ENCODE measurements at regions of chr11 and their contacts with region 1.

Region 1: GRCh38 chr11:43895601-43896000 is 15.0 kb downstream of the ALKBH3 start:
- DNase-seq: no peak
- ATAC-seq: no peak
- H3K4me3 ChIP-seq: no peak overlapping the region
- H3K4me3 Mint-ChIP-seq: no peak overlapping the region
- H3K27ac ChIP-seq: no peak overlapping the region
- H3K27ac Mint-ChIP-seq: no peak overlapping the region
- H3K4me1 ChIP-seq: no peaks in the 10 kb centered on the region
- H3K4me1 Mint-ChIP-seq: peaks cover 0 to 15% (median 9%) of the 10 kb centered on the region in 7 donors
- H3K27me3 ChIP-seq: no peaks in the 10 kb centered on the region
- H3K27me3 Mint-ChIP-seq: no peaks in the 10 kb centered on the region

Region 2: GRCh38 chr11:43880640-43881159 is 14.9 kb before region 1 on chr11 and contains the start of gene ALKBH3:
- CTCF ChIA-PET with region 1: no interaction called
- POLR2A ChIA-PET with region 1: no interaction called
- intact Hi-C with region 1: no loop called
- DNase-seq: peak; percentile 78 to 92 (median 90)
- ATAC-seq: peak; percentile 100
- H3K4me3 ChIP-seq: peak within 1 kb of the TSS; percentile 90
- H3K4me3 Mint-ChIP-seq: peak within 1 kb of the TSS; percentile 87 to 96 (median 90)
- H3K27ac ChIP-seq: peak within 1 kb of the TSS; percentile 80
- H3K27ac Mint-ChIP-seq: peak within 1 kb of the TSS; percentile 82 to 97 (median 88)
- H3K4me1 ChIP-seq: peaks cover 16 to 19% of the 10 kb centered on the region in 2 donors
- H3K4me1 Mint-ChIP-seq: peaks cover 12 to 47% (median 36%) of the 10 kb centered on the region in 7 donors
- H3K27me3 ChIP-seq: no peaks in the 10 kb centered on the region
- H3K27me3 Mint-ChIP-seq: peaks cover 0 to 22% (median 13%) of the 10 kb centered on the region in 5 donors
- total RNA-seq, gene ALKBH3: 28.9 to 32.8 (median 30.2) TPM

Region 3: GRCh38 chr11:44036811-44037657 is 141.4 kb after region 1 on chr11:
- CTCF ChIA-PET with region 1: no interaction called
- POLR2A ChIA-PET with region 1: no interaction called
- intact Hi-C with region 1: loop called in 1 of 2 experiments (anchors 1 kb)
- DNase-seq: peak in 3 of 9 donors; percentile 2 to 33 (median 5)
- ATAC-seq: peak; percentile 47
- H3K4me3 ChIP-seq: no peak overlapping the region
- H3K4me3 Mint-ChIP-seq: no peak overlapping the region
- H3K27ac ChIP-seq: no peak overlapping the region
- H3K27ac Mint-ChIP-seq: no peak overlapping the region
- H3K4me1 ChIP-seq: no peaks in the 10 kb centered on the region
- H3K4me1 Mint-ChIP-seq: no peaks in the 10 kb centered on the region
- H3K27me3 ChIP-seq: no peaks in the 10 kb centered on the region
- H3K27me3 Mint-ChIP-seq: peaks cover 3 to 16% (median 10%) of the 10 kb centered on the region in 5 donors